ENCODE measurements at regions of chr14 and their contacts with region 1.

Region 1: DNA sequence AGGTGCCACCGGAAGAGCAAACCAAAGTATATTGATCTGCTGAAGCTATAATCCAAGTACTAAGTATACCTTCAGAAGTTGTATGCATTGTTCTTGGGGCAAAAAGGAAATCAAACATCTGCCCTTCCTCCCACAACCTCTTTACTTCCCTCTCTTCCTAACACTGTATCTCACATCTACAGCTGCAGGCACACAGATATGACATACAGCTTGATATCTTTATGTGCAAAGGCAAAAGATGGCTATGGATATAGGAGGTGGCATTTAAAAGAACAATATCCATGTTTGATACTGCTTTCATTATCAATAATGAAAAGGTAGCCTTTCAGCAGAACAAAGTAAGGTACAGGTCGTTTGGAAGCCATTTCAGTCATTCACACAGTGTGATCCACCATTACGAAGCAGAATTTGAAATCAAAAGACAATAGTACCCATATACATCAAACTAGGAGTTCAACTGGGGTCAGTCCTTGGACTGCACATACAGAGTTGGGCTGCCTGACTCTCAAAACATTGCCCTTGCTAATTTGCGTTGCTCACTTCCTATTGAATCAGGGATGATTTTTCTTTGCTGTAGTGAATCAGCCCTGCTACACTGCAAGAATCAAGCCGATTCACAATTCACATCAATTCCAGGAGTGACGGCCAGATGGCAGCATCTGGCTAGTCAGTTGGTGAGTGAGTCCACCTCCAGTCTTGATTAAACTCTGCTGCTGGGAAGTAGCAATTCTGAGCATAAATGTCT is 8.9 kb downstream of the ANG start:
- DNase-seq: peak; percentile 57
- ATAC-seq: peak; percentile 77 to 90

Region 2: DNA sequence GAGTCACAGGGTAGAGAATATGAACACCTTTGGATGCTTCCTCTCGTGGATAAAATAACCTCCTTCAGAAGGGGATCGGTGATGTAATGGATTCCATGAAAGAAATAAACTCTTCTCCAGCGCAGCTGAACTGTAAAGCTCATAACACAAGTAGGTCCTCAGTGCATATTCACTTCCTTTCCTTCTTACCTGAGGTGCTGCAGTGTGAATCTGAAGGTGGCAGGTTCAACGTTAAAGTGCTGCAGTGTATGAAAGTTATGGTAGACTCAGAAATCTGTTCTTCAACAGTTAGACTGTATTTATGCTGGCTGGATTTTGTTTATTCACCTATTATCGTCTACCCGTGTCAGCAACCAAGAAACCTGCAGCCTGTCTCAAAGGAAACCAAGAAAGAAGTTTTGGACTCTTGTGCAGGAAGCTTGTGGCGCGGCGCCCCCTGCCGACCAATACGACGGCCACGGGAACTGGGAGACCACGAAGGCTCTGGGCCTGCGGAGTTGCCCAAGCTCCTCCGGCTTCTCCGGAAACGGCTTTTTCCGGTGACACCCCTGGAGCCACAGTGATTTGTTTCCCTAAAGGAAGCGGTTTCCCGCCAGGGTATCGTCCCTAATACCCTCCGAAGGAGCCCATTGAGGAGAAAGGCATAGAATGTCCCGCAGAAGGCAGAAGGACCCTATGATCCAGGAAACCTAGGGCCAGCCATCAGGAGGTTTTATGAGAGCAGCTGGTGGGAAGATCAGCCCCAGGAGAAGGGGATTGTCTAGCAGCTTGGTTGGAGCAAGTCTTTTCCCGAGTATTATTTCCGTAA is 176.1 kb after region 1 on chr14:
- intact Hi-C with region 1: loop called in 1 of 2 experiments (anchors 5 kb)
- DNase-seq: peak; percentile 92
- ATAC-seq: peak; percentile 97